A673 (cell line): ENCODE measurements at regions of chr3 and their contacts with region 1.

Region 1: GRCh38 chr3:62299857-62300406 is 73.4 kb downstream of the FEZF2 start:
- DNase-seq: no peak
- H3K4me3 ChIP-seq: no peak overlapping the region
- H3K27ac ChIP-seq: no peak overlapping the region
- H3K4me1 ChIP-seq: no peaks in the 10 kb centered on the region
- H3K27me3 ChIP-seq: no peaks in the 10 kb centered on the region
- CTCF ChIP-seq: no peak

Region 2: GRCh38 chr3:61685755-61686154 is 614.2 kb before region 1 on chr3:
- CTCF ChIA-PET with region 1: no interaction called
- POLR2A ChIA-PET with region 1: interaction called, 10 read pairs
- intact Hi-C with region 1: no loop called
- DNase-seq: peak; percentile 57
- H3K4me3 ChIP-seq: no peak overlapping the region
- H3K27ac ChIP-seq: no peak overlapping the region
- H3K4me1 ChIP-seq: peaks cover 54% of the 10 kb centered on the region
- H3K27me3 ChIP-seq: peaks cover 3% of the 10 kb centered on the region
- CTCF ChIP-seq: no peak

Region 3: GRCh38 chr3:63279005-63279878 is 979.3 kb after region 1 on chr3:
- CTCF ChIA-PET with region 1: no interaction called
- POLR2A ChIA-PET with region 1: no interaction called
- intact Hi-C with region 1: no loop called
- DNase-seq: peak; percentile 14
- H3K4me3 ChIP-seq: peak overlapping the region; percentile 60
- H3K27ac ChIP-seq: no peak overlapping the region
- H3K4me1 ChIP-seq: no peaks in the 10 kb centered on the region
- H3K27me3 ChIP-seq: no peaks in the 10 kb centered on the region
- CTCF ChIP-seq: no peak